PC-3 (cell line): ENCODE measurements at regions of chr2 and their contacts with region 1.

Region 1: GRCh38 chr2:8989536-8990079 is 13.9 kb downstream of the MBOAT2 start:
- DNase-seq: no peak
- ATAC-seq: no peak
- H3K4me3 ChIP-seq: no peak overlapping the region
- H3K27ac ChIP-seq: no peak overlapping the region
- H3K4me1 ChIP-seq: peaks cover 40% of the 10 kb centered on the region
- H3K27me3 ChIP-seq: no peaks in the 10 kb centered on the region
- CTCF ChIP-seq: no peak

Region 2: GRCh38 chr2:8803658-8804379 is 185.8 kb before region 1 on chr2:
- CTCF ChIA-PET with region 1: no interaction called
- POLR2A ChIA-PET with region 1: no interaction called
- intact Hi-C with region 1: no loop called
- DNase-seq: peak; percentile 99
- ATAC-seq: peak; percentile 100
- H3K4me3 ChIP-seq: no peak overlapping the region
- H3K27ac ChIP-seq: peak overlapping the region; percentile 63
- H3K4me1 ChIP-seq: peaks cover 23% of the 10 kb centered on the region
- H3K27me3 ChIP-seq: no peaks in the 10 kb centered on the region
- CTCF ChIP-seq: no peak; the same call in 1 of the 2 replicates

Region 3: DNA sequence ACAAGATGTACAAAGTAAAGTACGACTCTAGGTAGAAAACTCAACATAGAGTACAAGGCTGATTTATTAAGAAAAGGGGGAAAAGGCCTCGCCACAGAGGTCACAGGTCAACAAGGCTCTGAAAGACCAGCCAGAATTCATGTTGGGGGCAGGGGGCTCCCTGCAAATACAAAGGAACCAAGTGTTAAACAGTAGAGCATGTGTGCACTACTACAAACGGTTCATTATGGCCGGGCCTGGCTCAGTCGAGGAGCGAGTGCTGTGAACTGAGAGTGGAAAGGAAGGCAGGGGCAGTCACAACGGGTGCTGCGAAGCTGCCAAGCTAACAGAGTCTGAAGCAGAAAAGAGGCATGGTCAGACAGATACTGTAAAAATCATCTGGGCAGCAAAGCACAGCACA is 63.3 kb before region 1 on chr2:
- CTCF ChIA-PET with region 1: no interaction called
- POLR2A ChIA-PET with region 1: no interaction called
- intact Hi-C with region 1: loop called (anchors 2 kb)
- DNase-seq: no peak
- ATAC-seq: no peak
- H3K4me3 ChIP-seq: no peak overlapping the region
- H3K27ac ChIP-seq: no peak overlapping the region
- H3K4me1 ChIP-seq: no peaks in the 10 kb centered on the region; the same call in 1 of the 2 replicates
- H3K27me3 ChIP-seq: no peaks in the 10 kb centered on the region
- CTCF ChIP-seq: no peak